Common myeloid progenitor, CD34-positive (primary cell): ENCODE measurements at regions of chr11 and their contacts with region 1.

Region 1: GRCh38 chr11:75802913-75803820 is 11.8 kb upstream of the UVRAG start:
- DNase-seq: peak; percentile 64 to 81 (median 71)
- H3K4me3 ChIP-seq: no peak overlapping the region
- H3K27ac ChIP-seq: no peak overlapping the region
- H3K4me1 ChIP-seq: peaks cover 0 to 11% (median 7%) of the 10 kb centered on the region in 4 experiments
- H3K27me3 ChIP-seq: no peaks in the 10 kb centered on the region

Region 2: DNA sequence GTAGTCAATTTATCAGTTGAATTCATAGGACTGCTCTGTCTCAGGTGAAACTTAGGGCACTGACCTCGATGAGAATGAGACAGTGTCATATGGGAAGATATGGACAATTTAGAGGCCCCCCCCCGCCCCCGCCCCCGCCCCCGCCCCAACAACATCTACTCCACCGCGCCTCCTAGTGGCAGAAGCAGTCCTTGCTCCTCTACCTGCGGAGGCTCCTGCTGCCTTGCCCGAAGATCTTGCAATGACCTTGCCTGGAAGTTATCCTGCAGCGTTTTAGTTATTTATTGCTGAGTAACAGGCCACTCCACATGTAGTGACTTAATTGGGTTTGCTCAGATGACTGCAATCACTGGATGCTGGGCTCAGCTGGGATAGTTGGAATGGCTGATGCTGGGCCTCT is 226.0 kb before region 1 on chr11:
- CTCF ChIA-PET with region 1: no interaction called
- POLR2A ChIA-PET with region 1: no interaction called
- DNase-seq: peak in 2 of 3 donors; percentile 24 to 40
- H3K4me3 ChIP-seq: no peak overlapping the region
- H3K27ac ChIP-seq: no peak overlapping the region
- H3K4me1 ChIP-seq: peaks cover 0 to 13% (median 10%) of the 10 kb centered on the region in 4 experiments
- H3K27me3 ChIP-seq: no peaks in the 10 kb centered on the region

Region 3: DNA sequence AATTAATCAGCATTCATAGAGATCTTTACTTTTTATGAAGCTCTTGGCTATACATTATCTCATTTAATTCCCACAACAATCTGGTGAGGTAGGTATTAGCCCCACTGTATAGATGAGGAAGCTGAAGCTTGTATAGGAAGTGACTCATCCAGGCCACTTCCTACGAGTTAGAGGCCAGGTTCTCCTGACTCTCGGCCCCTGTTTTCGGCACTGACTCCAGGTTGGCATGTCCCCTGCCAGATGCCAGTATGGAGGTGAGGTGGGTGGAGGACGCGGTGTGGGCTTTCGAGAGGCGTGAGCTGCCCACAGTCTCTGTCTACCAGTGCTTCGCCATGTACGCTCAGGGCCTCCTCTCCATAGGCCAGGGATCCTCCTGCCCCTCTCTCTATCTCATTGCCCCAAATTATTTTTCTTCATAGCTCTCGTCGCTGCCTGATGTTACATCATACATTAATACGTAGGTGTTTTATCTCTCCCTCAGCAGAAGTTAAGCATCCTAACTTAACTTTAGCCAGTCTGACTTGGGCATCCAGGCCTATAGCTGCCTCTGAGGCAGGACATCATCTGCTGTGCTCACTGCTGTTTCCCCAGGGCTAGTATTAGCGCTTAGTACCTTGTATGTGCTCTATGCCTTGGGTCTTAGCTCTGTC is 25.6 kb before region 1 on chr11:
- CTCF ChIA-PET with region 1: interaction called, 19 read pairs
- POLR2A ChIA-PET with region 1: no interaction called
- DNase-seq: peak in 2 of 3 donors; percentile 42 to 54
- H3K4me3 ChIP-seq: no peak overlapping the region
- H3K27ac ChIP-seq: no peak overlapping the region
- H3K4me1 ChIP-seq: peaks cover 3 to 32% (median 9%) of the 10 kb centered on the region in 4 experiments
- H3K27me3 ChIP-seq: no peaks in the 10 kb centered on the region

Region 4: GRCh38 chr11:75814686-75815344 is 11.6 kb after region 1 on chr11 and contains the start of gene UVRAG:
- CTCF ChIA-PET with region 1: interaction called, 36 read pairs
- POLR2A ChIA-PET with region 1: interaction called, 3 read pairs
- DNase-seq: peak; percentile 99 to 100 (median 99)
- H3K4me3 ChIP-seq: peak within 1 kb of the TSS; percentile 92 to 98 (median 95)
- H3K27ac ChIP-seq: peak within 1 kb of the TSS; percentile 85 to 93
- H3K4me1 ChIP-seq: peaks cover 5 to 37% (median 28%) of the 10 kb centered on the region in 4 experiments
- H3K27me3 ChIP-seq: no peaks in the 10 kb centered on the region

Region 5: GRCh38 chr11:75862437-75862836 is 59.3 kb after region 1 on chr11:
- CTCF ChIA-PET with region 1: interaction called, 85 read pairs
- POLR2A ChIA-PET with region 1: no interaction called
- DNase-seq: no peak
- H3K4me3 ChIP-seq: no peak overlapping the region
- H3K27ac ChIP-seq: no peak overlapping the region
- H3K4me1 ChIP-seq: peaks cover 0 to 6% (median 0%) of the 10 kb centered on the region in 4 experiments
- H3K27me3 ChIP-seq: no peaks in the 10 kb centered on the region

Region 6: GRCh38 chr11:75867775-75868374 is 64.7 kb after region 1 on chr11:
- CTCF ChIA-PET with region 1: interaction called, 85 read pairs
- POLR2A ChIA-PET with region 1: no interaction called
- DNase-seq: peak; percentile 65 to 79 (median 72)
- H3K4me3 ChIP-seq: no peak overlapping the region
- H3K27ac ChIP-seq: no peak overlapping the region
- H3K4me1 ChIP-seq: peaks cover 15 to 41% (median 31%) of the 10 kb centered on the region in 4 experiments
- H3K27me3 ChIP-seq: no peaks in the 10 kb centered on the region

Region 7: GRCh38 chr11:75873417-75874221 is 70.5 kb after region 1 on chr11:
- CTCF ChIA-PET with region 1: interaction called, 85 read pairs
- POLR2A ChIA-PET with region 1: no interaction called
- DNase-seq: peak; percentile 56 to 86 (median 80)
- H3K4me3 ChIP-seq: peak overlapping the region in 6 of 7 experiments; percentile 43 to 76 (median 61)
- H3K27ac ChIP-seq: peak overlapping the region; percentile 61 to 88
- H3K4me1 ChIP-seq: peaks cover 33 to 67% (median 50%) of the 10 kb centered on the region in 4 experiments
- H3K27me3 ChIP-seq: no peaks in the 10 kb centered on the region